ENCODE measurements at regions of chrX and their contacts with region 1.

Region 1: GRCh38 chrX:9995855-9996339 is 28.7 kb downstream of the CLDN34 start:
- DNase-seq: peak; percentile 69 to 84
- ATAC-seq: peak; percentile 79 to 98 (median 95)
- H3K4me3 ChIP-seq: no peak overlapping the region
- H3K4me3 Mint-ChIP-seq: no peak overlapping the region
- H3K27ac ChIP-seq: no peak overlapping the region
- H3K27ac Mint-ChIP-seq: no peak overlapping the region
- H3K4me1 ChIP-seq: no peaks in the 10 kb centered on the region
- H3K4me1 Mint-ChIP-seq: no peaks in the 10 kb centered on the region
- H3K27me3 ChIP-seq: no peaks in the 10 kb centered on the region
- H3K27me3 Mint-ChIP-seq: peaks cover 0 to 2% of the 10 kb centered on the region in 2 donors
- CTCF ChIP-seq: peak; percentile 85

Region 2: DNA sequence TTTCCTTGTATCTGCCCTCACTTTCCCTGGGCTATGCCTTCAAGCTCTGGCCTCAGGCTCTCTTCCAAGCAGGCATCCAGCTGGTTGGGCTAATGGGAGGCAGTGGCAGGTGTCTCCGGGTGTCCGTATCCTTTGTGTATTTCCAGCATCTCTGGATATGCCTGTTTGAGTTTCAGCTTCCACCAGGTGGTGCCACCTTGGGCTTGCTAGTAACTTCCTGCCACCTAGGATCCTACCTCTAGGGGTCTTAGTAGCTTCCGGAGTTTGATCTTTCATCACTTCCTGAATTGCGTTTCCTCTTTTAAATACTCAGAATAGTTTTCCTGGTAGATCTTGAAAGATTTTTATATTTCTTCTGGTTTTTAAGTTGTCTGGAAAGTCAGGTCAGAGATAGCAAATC is 1240.8 kb before region 1 on chrX:
- intact Hi-C with region 1: loop called (anchors 10 kb)
- DNase-seq: peak in 1 of 2 donors; percentile 2
- ATAC-seq: no peak
- H3K4me3 ChIP-seq: no peak overlapping the region
- H3K4me3 Mint-ChIP-seq: no peak overlapping the region
- H3K27ac ChIP-seq: no peak overlapping the region
- H3K27ac Mint-ChIP-seq: no peak overlapping the region
- H3K4me1 ChIP-seq: no peaks in the 10 kb centered on the region
- H3K4me1 Mint-ChIP-seq: no peaks in the 10 kb centered on the region
- H3K27me3 ChIP-seq: no peaks in the 10 kb centered on the region
- H3K27me3 Mint-ChIP-seq: peaks cover 0 to 16% of the 10 kb centered on the region in 2 donors
- CTCF ChIP-seq: no peak

Region 3: GRCh38 chrX:9885150-9885549 is 110.7 kb before region 1 on chrX:
- intact Hi-C with region 1: loop called (anchors 5 kb)
- DNase-seq: peak; percentile 21 to 63
- ATAC-seq: peak; percentile 62 to 86 (median 64)
- H3K4me3 ChIP-seq: no peak overlapping the region
- H3K4me3 Mint-ChIP-seq: no peak overlapping the region
- H3K27ac ChIP-seq: no peak overlapping the region
- H3K27ac Mint-ChIP-seq: no peak overlapping the region
- H3K4me1 ChIP-seq: no peaks in the 10 kb centered on the region
- H3K4me1 Mint-ChIP-seq: peaks cover 0 to 4% of the 10 kb centered on the region in 2 donors
- H3K27me3 ChIP-seq: no peaks in the 10 kb centered on the region
- H3K27me3 Mint-ChIP-seq: peaks cover 9 to 22% of the 10 kb centered on the region in 2 donors
- CTCF ChIP-seq: peak; percentile 25

Region 4: GRCh38 chrX:10017866-10018265 is 22.0 kb after region 1 on chrX:
- intact Hi-C with region 1: no loop called
- DNase-seq: no peak
- ATAC-seq: no peak
- H3K4me3 ChIP-seq: no peak overlapping the region
- H3K4me3 Mint-ChIP-seq: peak overlapping the region; percentile 9
- H3K27ac ChIP-seq: no peak overlapping the region
- H3K27ac Mint-ChIP-seq: no peak overlapping the region
- H3K4me1 ChIP-seq: peaks cover 12% of the 10 kb centered on the region
- H3K4me1 Mint-ChIP-seq: peaks cover 0 to 8% of the 10 kb centered on the region in 2 donors
- H3K27me3 ChIP-seq: no peaks in the 10 kb centered on the region
- H3K27me3 Mint-ChIP-seq: peaks cover 0 to 4% of the 10 kb centered on the region in 2 donors
- CTCF ChIP-seq: no peak

Measured in natural killer cell (primary cell).